CD4-positive, alpha-beta memory T cell (primary cell): ENCODE measurements at regions of chr7 and their contacts with region 1.

Region 1: DNA sequence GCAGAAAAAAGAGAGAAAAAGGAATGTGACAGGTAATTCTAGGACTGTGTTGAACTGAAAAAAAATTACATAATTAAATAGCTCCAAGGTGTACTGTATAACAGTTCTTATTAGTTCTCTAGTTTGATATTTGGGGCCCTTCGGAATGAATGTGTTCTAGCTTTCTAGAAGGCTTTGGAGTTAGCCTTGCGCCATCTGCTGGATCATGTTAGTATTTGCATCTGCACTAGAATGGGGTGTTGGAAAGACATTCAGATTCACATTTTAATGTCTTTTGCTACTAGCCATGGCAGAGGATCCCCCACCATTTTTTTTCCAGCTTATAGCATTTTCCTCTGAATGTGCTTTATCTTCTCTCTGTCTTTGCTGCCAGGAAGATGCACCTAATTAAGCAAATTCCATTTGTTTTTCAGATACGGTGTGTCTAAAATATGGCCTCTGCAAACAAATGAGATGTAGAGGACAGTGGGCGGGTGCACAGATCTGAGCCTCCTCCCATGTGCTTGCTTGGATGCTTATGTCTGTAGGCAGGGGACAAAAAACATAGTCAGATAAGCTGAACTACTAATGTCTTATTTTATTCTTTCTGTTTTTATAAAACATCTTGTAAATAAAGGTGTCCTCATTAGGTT is 238.5 kb downstream of the PHF14 start:
- DNase-seq: peak in 4 of 5 donors; percentile 21 to 45 (median 38)
- H3K4me3 ChIP-seq: no peak overlapping the region
- H3K4me3 Mint-ChIP-seq: no peak overlapping the region
- H3K27ac ChIP-seq: no peak overlapping the region
- H3K27ac Mint-ChIP-seq: no peak overlapping the region
- H3K4me1 ChIP-seq: no peaks in the 10 kb centered on the region
- H3K4me1 Mint-ChIP-seq: peaks cover 0 to 2% (median 0%) of the 10 kb centered on the region in 4 donors
- H3K27me3 ChIP-seq: no peaks in the 10 kb centered on the region
- H3K27me3 Mint-ChIP-seq: peaks cover 0 to 1% of the 10 kb centered on the region in 2 donors

Region 2: DNA sequence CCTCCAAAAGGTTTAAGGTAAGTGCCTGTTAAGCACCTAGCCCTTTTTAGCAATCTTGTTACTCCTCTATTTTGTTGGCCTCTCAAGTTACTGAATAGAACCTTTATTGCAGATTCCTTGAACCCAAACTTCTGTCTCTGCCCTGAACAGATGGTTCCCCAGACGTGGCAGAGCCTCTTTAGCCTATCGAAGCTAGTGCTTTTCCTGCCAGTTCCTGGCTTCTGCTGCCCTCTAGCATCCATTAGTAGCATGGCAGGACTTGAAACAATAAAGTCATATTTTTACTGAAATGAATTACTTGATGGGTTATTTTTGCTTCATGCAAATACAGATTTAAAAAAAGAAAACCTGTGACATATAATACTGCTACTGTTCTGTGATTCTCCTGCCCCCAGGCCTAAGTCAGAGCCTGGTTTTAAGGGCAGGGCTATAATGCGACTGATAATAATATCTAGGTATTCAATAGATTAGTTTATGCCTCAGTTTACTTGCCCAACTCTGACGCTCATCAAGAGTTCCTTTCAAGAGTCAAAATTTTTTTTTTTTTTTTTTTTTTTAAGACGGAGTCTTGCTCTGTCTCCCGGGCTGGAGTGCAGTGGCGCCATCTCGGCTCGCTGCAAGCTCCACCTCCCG is 322.8 kb before region 1 on chr7:
- CTCF ChIA-PET with region 1: interaction called, 5 read pairs
- POLR2A ChIA-PET with region 1: no interaction called
- intact Hi-C with region 1: loop called (anchors 2 kb)
- DNase-seq: peak; percentile 40 to 48 (median 41)
- H3K4me3 ChIP-seq: no peak overlapping the region
- H3K4me3 Mint-ChIP-seq: peak overlapping the region in 7 of 8 donors; percentile 61 to 87 (median 78)
- H3K27ac ChIP-seq: no peak overlapping the region
- H3K27ac Mint-ChIP-seq: peak overlapping the region in 3 of 7 donors; percentile 26 to 88 (median 84)
- H3K4me1 ChIP-seq: peaks cover 10% of the 10 kb centered on the region
- H3K4me1 Mint-ChIP-seq: peaks cover 8 to 13% (median 11%) of the 10 kb centered on the region in 4 donors
- H3K27me3 ChIP-seq: no peaks in the 10 kb centered on the region
- H3K27me3 Mint-ChIP-seq: no peaks in the 10 kb centered on the region

Region 3: DNA sequence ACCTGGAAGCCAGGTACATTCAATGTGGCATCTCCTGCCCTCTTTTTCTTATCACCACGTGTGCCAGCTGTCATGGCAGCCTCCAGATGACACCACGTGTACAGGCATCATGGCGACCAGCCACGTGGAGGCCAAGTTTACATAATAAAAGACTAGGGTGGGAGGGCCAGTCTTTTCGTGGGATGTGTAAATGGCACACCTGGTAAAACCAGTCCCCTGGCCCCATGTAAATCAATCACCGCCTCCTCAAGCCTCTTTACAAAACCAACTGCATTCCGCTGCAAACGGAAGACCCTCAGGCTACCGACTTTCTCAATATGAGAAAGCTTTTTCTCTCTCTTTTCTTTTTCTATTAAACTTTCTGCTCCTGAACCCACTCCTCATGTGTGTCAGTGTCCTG is 303.6 kb before region 1 on chr7:
- CTCF ChIA-PET with region 1: interaction called, 5 read pairs
- POLR2A ChIA-PET with region 1: no interaction called
- intact Hi-C with region 1: loop called (anchors 5 kb)
- DNase-seq: no peak
- H3K4me3 ChIP-seq: no peak overlapping the region
- H3K4me3 Mint-ChIP-seq: no peak overlapping the region
- H3K27ac ChIP-seq: no peak overlapping the region
- H3K27ac Mint-ChIP-seq: no peak overlapping the region
- H3K4me1 ChIP-seq: no peaks in the 10 kb centered on the region
- H3K4me1 Mint-ChIP-seq: no peaks in the 10 kb centered on the region
- H3K27me3 ChIP-seq: no peaks in the 10 kb centered on the region
- H3K27me3 Mint-ChIP-seq: peaks cover 5% of the 10 kb centered on the region in 2 donors

Region 4: GRCh38 chr7:11281953-11282352 is 69.8 kb after region 1 on chr7:
- CTCF ChIA-PET with region 1: no interaction called
- POLR2A ChIA-PET with region 1: no interaction called
- intact Hi-C with region 1: no loop called
- DNase-seq: no peak
- H3K4me3 ChIP-seq: no peak overlapping the region
- H3K4me3 Mint-ChIP-seq: no peak overlapping the region
- H3K27ac ChIP-seq: no peak overlapping the region
- H3K27ac Mint-ChIP-seq: no peak overlapping the region
- H3K4me1 ChIP-seq: no peaks in the 10 kb centered on the region
- H3K4me1 Mint-ChIP-seq: no peaks in the 10 kb centered on the region
- H3K27me3 ChIP-seq: no peaks in the 10 kb centered on the region
- H3K27me3 Mint-ChIP-seq: peaks cover 0 to 4% of the 10 kb centered on the region in 2 donors